ENCODE measurements at regions of chr10 and their contacts with region 1.

Region 1: DNA sequence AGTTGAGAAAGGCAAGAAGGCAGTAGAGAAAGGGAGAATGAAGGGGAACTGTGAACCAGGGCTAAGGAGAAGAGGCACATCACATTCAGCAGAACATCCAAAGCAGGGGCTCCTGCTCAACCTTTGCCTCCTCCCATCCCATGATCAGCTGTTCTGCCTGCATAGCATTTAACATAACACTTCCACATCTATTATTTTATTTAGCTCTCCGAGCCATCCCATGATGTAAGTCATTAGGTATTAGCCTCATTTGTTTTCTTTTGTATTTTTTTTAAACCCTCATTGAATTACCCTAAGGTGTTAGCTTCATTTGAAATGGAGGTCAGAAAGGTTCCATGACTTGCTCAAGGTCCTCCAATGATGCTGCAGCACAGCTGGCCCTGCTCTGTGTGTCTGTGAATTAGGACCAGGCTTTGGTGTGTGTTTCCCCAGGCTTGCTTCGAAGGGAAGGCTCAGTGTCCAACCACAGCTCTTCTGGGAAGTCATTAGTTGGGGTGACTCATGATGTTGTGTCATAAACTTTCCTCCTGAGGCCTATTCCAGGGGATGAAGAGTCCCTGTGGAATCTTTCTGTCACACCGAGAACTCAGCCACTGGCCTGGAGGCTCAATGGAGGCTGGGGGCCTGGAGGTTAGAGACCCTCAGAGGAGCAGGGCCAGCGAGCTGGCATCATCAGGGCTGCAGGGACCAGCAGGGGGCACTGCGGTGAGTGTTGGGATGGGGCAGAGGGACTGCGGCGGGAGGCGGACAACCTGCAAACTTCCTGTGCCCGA is 16.5 kb downstream of the NPFFR1 start:
- DNase-seq: no peak
- H3K4me3 ChIP-seq: no peak overlapping the region
- H3K27ac ChIP-seq: no peak overlapping the region
- H3K4me1 ChIP-seq: no peaks in the 10 kb centered on the region
- H3K27me3 ChIP-seq: no peaks in the 10 kb centered on the region
- CTCF ChIP-seq: no peak
- EP300 ChIP-seq: no peak
- POLR2A ChIP-seq: no peak

Region 2: GRCh38 chr10:70176441-70176840 is 90.9 kb before region 1 on chr10:
- intact Hi-C with region 1: no loop called
- DNase-seq: no peak
- H3K4me3 ChIP-seq: no peak overlapping the region
- H3K27ac ChIP-seq: no peak overlapping the region
- H3K4me1 ChIP-seq: no peaks in the 10 kb centered on the region
- H3K27me3 ChIP-seq: no peaks in the 10 kb centered on the region
- CTCF ChIP-seq: no peak
- EP300 ChIP-seq: no peak
- POLR2A ChIP-seq: no peak

Region 3: DNA sequence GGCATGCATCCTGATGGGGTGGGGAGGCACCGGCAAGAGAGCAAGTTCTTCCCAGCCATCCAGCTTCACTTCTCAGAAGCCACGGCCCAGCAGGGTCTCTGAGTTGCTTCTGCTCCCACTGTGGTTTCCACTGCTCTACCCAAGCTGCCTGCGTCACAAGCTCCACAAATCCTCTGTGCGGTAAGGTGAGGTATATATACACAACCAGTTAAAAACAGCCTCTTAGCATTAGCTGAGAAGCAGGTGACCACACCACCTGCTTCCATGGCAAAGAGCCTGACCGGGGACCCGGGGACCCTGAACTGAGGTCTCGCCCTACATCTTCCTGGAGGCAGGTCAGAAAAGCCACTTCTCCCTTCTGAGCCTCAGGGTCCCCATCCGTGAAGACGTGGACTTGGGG is 63.3 kb after region 1 on chr10:
- intact Hi-C with region 1: loop called in 1 of 4 experiments (anchors 1 kb)
- DNase-seq: no peak
- H3K4me3 ChIP-seq: no peak overlapping the region
- H3K27ac ChIP-seq: no peak overlapping the region
- H3K4me1 ChIP-seq: peaks cover 8% of the 10 kb centered on the region
- H3K27me3 ChIP-seq: no peaks in the 10 kb centered on the region
- CTCF ChIP-seq: no peak
- EP300 ChIP-seq: no peak
- POLR2A ChIP-seq: no peak

Region 4: DNA sequence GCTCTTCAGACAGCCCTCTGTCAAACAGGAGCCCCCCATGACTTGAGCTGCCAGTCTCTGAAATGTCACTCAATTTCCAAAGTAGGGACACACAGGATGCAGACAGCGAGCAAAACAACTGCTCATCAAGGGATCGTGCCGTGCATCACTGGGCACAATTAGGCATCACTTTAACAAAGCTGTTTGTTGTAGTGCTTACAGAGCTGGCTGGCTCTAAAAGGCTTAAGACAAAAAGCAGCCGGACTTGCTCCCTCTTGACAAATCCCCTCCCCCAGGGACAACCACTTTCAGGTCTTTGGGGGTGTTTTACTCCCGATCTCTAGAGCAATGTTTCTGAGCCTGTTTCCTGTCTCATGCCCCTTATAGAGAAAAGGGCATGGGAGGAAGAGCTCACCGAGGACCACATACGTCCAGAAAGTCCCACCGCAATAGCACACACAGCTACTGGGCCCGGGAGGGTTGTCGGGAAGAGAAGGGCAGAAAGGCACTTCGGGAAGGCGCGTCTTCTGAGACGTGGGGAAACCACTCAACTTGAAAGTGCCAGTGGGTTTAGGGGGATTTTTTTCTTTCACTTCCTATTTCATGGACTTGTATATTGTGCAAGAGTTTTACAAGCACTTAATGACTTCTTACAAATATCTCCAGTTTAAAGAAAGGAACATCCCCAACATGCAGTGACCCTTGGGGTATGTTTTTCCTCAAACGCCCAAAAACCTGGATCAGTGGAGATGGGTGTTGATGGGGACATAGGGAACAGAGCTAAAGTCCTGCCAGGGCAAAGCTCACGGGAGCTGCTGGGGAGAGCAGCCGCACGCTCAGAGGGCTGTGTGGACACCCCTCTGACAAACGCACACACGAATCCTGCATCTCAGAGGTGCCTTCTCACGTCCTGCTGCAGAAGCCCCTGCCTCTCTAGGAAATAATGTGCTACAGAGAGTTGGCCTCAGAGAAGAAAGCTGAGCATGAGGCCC is 88.0 kb after region 1 on chr10:
- intact Hi-C with region 1: loop called in 1 of 4 experiments (anchors 5 kb)
- DNase-seq: no peak
- H3K4me3 ChIP-seq: no peak overlapping the region
- H3K27ac ChIP-seq: no peak overlapping the region
- H3K4me1 ChIP-seq: no peaks in the 10 kb centered on the region
- H3K27me3 ChIP-seq: no peaks in the 10 kb centered on the region
- CTCF ChIP-seq: no peak
- EP300 ChIP-seq: no peak
- POLR2A ChIP-seq: no peak